ENCODE measurements at regions of chr17 and their contacts with region 1.

Region 1: DNA sequence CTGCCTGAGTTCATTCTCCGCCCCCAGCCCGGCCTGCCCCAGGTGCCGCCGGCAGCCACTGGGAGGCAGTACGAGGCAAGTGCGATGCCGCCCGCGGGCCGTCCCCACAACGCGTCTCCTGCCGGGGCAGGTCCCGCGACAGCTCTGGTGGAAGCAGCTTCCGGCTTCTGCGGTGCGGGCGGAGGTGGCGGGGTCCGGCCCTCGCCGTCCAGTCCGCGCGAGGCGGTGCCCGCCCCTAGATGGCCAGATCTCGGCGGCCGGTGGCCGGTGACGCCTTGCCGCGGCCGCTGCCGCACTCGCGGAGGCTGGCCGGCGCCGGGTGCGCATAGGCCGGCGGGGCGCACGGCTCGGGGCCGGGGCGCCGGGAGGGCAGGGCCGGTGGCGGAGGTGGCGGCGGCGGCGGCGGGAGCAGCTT is 1.8 kb downstream of the GJD3 start:
- DNase-seq: peak in 2 of 10 donors; percentile 41 to 49
- H3K4me3 ChIP-seq: peak overlapping the region in 54 of 59 donors; percentile 26 to 67 (median 48)
- H3K27ac ChIP-seq: no peak overlapping the region
- H3K27me3 ChIP-seq: peaks cover 0 to 35% (median 6%) of the 10 kb centered on the region in 45 donors
- CTCF ChIP-seq: peak in 37 of 56 donors; percentile 13 to 55 (median 33)

Region 2: DNA sequence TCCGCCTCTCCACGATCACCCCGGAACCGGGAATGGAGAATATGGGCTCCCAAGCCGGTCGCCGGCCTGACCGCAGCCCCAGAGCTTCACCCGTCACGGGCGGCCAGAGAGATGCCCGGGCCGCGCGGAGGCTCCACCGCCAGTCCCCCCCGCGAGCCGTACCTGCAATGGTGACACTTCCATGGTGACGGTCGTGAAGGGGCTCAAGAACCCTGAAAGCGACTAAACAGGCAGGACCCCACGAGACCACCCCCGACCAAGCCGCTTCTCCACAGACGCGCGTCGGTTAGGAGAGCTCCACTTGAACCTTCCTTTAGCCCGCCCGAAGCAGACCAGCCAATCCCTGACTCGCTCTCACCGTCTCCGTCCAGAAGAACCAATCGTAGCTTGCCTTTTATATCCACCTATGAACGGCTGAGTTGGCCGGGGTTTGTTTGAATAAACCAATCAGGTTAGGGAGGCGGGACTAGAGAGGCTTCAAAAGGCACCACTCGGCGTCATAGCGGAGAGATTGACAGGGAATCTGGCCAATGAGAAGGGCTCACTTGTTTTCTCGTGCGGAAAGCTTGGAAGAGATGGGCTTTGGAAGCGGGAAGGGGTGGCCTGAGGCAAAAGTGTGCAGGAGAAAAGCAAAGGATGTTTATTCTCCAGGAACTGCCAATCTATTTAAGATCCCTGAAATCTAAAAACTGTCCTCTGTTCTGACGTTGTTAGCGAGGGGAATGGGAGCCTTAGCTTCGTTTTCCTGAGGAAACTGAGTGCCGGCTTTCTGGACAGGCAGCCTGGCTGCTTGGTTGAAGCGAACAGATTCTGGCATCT is 55.1 kb after region 1 on chr17 and contains the start of gene TOP2A:
- intact Hi-C with region 1: loop called (anchors 5 kb)
- DNase-seq: peak; percentile 81 to 99 (median 96)
- H3K4me3 ChIP-seq: peak within 1 kb of the TSS; percentile 40 to 88 (median 68)
- H3K27ac ChIP-seq: peak within 1 kb of the TSS in 18 of 59 donors; percentile 25 to 80 (median 50)
- H3K27me3 ChIP-seq: peaks cover 0 to 18% (median 7%) of the 10 kb centered on the region in 45 donors
- CTCF ChIP-seq: peak in 11 of 56 donors; percentile 8 to 42 (median 20)
- total RNA-seq, gene TOP2A: 0.04 to 3.1 (median 0.42) TPM in 55 of 120 experiments, not detected in the others

Region 3: GRCh38 chr17:40531051-40531991 is 168.6 kb after region 1 on chr17:
- intact Hi-C with region 1: loop called (anchors 1 to 2 kb)
- DNase-seq: peak in 1 of 10 donors; percentile 14
- H3K4me3 ChIP-seq: no peak overlapping the region
- H3K27ac ChIP-seq: no peak overlapping the region
- H3K27me3 ChIP-seq: peaks cover 0 to 4% (median 0%) of the 10 kb centered on the region in 45 donors
- CTCF ChIP-seq: no peak

Region 4: DNA sequence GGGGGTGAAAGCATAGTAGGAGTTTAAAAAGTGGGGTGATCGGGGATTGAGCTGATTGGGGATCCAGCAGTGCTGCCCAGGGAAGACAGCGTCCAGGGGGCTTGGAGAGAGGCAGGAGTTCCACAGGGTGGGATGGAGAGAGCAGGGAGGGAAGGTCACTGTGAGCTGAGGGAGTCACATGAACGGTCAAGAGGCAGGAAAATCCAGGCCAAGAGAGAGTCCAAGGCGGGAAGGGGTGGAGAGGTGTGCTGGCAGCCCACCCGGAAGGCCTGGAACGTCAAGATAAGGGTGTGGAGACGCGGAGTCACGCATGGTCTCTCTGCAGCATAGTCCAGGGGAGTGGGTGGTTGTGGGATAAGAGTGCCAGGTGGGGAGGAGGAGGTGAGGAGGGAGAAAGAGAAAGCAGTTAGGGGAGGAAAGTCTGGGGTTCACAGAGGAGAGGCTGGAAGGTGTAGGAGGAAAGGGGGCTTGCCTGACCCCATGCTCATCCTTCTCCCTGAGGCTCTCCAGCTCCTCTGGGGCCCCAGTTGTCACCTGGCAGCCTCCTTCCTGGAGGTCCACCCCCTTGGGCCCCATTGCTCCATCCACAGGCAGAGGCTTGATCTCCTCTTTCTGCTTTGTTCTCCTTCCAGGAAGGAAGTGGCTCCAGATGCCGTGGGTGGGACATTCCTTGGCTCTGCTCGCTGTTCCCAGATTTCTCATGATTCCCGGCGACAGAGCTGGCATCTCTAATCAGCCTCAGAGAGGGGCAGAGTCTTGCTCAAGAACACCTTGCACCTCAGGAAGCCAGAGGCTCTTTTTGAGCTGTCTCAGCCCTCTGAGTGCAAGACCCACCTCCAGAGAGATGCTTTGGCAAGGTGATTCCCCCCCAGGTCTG is 173.8 kb after region 1 on chr17:
- intact Hi-C with region 1: loop called (anchors 1 to 2 kb)
- DNase-seq: peak in 6 of 10 donors; percentile 34 to 70 (median 58)
- H3K4me3 ChIP-seq: no peak overlapping the region
- H3K27ac ChIP-seq: peak overlapping the region in 49 of 59 donors; percentile 6 to 83 (median 60)
- H3K27me3 ChIP-seq: no peaks in the 10 kb centered on the region
- CTCF ChIP-seq: no peak